ENCODE measurements at regions of chr12 and their contacts with region 1.

Region 1: GRCh38 chr12:116142936-116143898 is 134.3 kb downstream of the MED13L start:
- DNase-seq: peak; percentile 79 to 92 (median 87)
- H3K4me3 ChIP-seq: peak overlapping the region in 5 of 7 experiments; percentile 20 to 63 (median 31)
- H3K27ac ChIP-seq: peak overlapping the region; percentile 59 to 84
- H3K4me1 ChIP-seq: peaks cover 25 to 39% (median 32%) of the 10 kb centered on the region in 4 experiments
- H3K27me3 ChIP-seq: no peaks in the 10 kb centered on the region

Region 2: GRCh38 chr12:115922952-115923564 is 220.2 kb before region 1 on chr12:
- CTCF ChIA-PET with region 1: no interaction called
- POLR2A ChIA-PET with region 1: no interaction called
- DNase-seq: no peak
- H3K4me3 ChIP-seq: no peak overlapping the region
- H3K27ac ChIP-seq: no peak overlapping the region
- H3K4me1 ChIP-seq: no peaks in the 10 kb centered on the region
- H3K27me3 ChIP-seq: peaks cover 2 to 30% (median 3%) of the 10 kb centered on the region in 5 experiments

Region 3: GRCh38 chr12:116194935-116195431 is 51.8 kb after region 1 on chr12:
- CTCF ChIA-PET with region 1: interaction called, 17 read pairs
- POLR2A ChIA-PET with region 1: interaction called, 3 read pairs
- DNase-seq: peak; percentile 37 to 86 (median 86)
- H3K4me3 ChIP-seq: no peak overlapping the region
- H3K27ac ChIP-seq: peak overlapping the region; percentile 34 to 66
- H3K4me1 ChIP-seq: peaks cover 6 to 23% (median 18%) of the 10 kb centered on the region in 4 experiments
- H3K27me3 ChIP-seq: no peaks in the 10 kb centered on the region

Region 4: GRCh38 chr12:116599285-116600136 is 456.3 kb after region 1 on chr12:
- CTCF ChIA-PET with region 1: interaction called, 30 read pairs
- POLR2A ChIA-PET with region 1: no interaction called
- DNase-seq: peak; percentile 72 to 76 (median 76)
- H3K4me3 ChIP-seq: peak overlapping the region in 4 of 7 experiments; percentile 5 to 64 (median 42)
- H3K27ac ChIP-seq: peak overlapping the region in 1 of 2 experiments; percentile 50
- H3K4me1 ChIP-seq: peaks cover 12 to 52% (median 36%) of the 10 kb centered on the region in 4 experiments
- H3K27me3 ChIP-seq: no peaks in the 10 kb centered on the region

Region 5: DNA sequence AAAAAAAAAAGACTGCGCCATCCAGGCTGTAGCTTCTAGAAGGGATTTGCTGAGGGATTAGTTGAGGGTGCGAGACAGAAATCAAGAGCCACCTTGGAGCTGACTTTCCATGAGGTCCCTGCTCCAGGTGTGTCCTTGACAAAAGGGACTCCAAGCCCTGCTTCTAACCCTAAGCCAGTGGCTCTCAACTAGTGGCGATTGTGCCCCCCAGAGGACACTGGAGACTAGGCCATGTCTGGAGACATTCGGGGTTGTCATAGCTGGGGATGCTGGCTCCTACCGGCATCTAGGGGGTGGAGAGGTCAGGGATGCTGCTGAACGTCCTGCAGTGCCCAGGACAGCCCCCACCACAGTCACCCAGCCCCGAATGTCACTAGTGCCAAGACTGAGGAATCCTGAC is 554.1 kb after region 1 on chr12:
- CTCF ChIA-PET with region 1: interaction called, 21 read pairs
- POLR2A ChIA-PET with region 1: no interaction called
- DNase-seq: peak in 2 of 3 donors; percentile 53 to 56
- H3K4me3 ChIP-seq: no peak overlapping the region
- H3K27ac ChIP-seq: no peak overlapping the region
- H3K4me1 ChIP-seq: peaks cover 5 to 45% (median 42%) of the 10 kb centered on the region in 4 experiments
- H3K27me3 ChIP-seq: no peaks in the 10 kb centered on the region

Measured in common myeloid progenitor, CD34-positive (primary cell).